ENCODE measurements at regions of chr5 and their contacts with region 1.

Region 1: DNA sequence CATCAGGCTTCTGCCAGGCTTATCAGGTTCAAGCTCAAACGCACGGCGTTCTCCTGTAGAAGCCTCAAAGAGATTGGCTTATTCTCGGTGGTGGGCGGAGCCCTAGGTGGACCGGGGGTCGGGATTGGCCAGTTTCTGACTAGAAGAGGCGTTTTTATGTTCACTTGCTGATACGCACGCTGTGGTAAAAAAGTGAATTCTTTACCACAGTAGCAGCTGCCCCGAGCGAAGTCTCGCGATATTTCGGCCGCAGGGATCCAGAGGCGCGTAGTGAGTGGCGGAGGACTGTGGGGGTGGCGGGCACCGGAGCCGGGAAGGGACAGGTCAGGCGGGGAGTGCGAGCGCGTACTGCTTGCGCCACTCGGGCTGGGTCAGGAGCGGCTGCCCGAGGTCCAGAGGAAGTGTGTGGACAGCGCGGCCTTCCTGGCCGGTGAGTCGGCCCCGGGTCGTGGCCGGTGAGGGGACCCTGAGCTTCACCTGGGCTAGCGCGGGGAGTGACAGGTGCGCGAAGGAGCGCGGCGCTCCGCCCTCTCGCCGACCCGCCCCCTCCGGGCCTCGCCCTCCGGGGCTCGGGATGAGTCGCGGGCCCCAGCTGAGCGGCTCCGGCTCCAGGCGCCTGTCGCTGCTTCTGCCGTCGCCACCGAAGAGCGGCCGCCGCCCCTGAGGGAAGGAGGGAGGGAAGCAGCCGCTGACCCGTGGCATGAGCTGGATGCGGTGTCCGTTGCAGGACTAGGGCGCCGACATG is at the start of gene DMXL1:
- DNase-seq: peak; percentile 97
- ATAC-seq: peak; percentile 88
- H3K4me3 ChIP-seq: peak within 1 kb of the TSS; percentile 98
- H3K27ac ChIP-seq: peak within 1 kb of the TSS; percentile 77
- H3K4me1 ChIP-seq: peaks cover 11% of the 10 kb centered on the region
- H3K27me3 ChIP-seq: no peaks in the 10 kb centered on the region
- CTCF ChIP-seq: no peak
- total RNA-seq, gene DMXL1: 16.0 and 20.6 TPM in 2 replicates

Region 2: GRCh38 chr5:119036101-119036762 is 34.8 kb before region 1 on chr5:
- CTCF ChIA-PET with region 1: interaction called, 3 read pairs
- POLR2A ChIA-PET with region 1: interaction called, 7 read pairs
- intact Hi-C with region 1: loop called (anchors 2 kb)
- DNase-seq: peak; percentile 78
- ATAC-seq: peak; percentile 94
- H3K4me3 ChIP-seq: no peak overlapping the region
- H3K27ac ChIP-seq: peak overlapping the region; percentile 64
- H3K4me1 ChIP-seq: peaks cover 19% of the 10 kb centered on the region
- H3K27me3 ChIP-seq: no peaks in the 10 kb centered on the region
- CTCF ChIP-seq: no peak

Region 3: DNA sequence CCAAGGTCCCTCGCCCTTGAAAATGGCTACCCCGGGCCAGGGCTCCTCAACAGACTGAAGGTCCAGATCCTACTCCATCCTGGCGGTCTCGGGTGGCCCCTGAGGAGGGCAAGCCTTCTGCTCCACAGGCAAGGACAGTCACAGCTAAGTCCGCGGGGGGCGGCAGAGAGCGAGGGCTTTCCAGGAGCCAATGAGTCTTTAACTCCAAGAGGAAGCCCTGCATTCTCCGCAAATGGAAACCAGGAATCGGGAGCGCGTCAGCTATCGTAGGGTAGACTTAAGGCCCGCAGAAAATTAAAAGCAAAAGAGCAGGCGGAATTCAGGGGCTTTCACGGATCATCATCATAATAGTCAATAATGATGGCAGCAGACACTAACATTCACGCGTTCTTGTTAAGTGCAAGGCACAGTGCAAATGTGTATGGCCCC is 197.0 kb after region 1 on chr5:
- CTCF ChIA-PET with region 1: interaction called, 4 read pairs
- POLR2A ChIA-PET with region 1: interaction called, 3 read pairs
- intact Hi-C with region 1: loop called (anchors 2 kb)
- DNase-seq: peak; percentile 90
- ATAC-seq: peak; percentile 77
- H3K4me3 ChIP-seq: peak overlapping the region; percentile 93
- H3K27ac ChIP-seq: peak overlapping the region; percentile 75
- H3K4me1 ChIP-seq: peaks cover 33% of the 10 kb centered on the region
- H3K27me3 ChIP-seq: no peaks in the 10 kb centered on the region
- CTCF ChIP-seq: no peak

Measured in PC-3 (cell line).